ENCODE measurements at regions of chr7 and their contacts with region 1.

Region 1: GRCh38 chr7:74061840-74062539 is 21.6 kb upstream of the LIMK1 start:
- DNase-seq: peak; percentile 43
- H3K4me3 Mint-ChIP-seq: no peak overlapping the region
- H3K27ac Mint-ChIP-seq: peak overlapping the region; percentile 80
- H3K4me1 Mint-ChIP-seq: peaks cover 2% of the 10 kb centered on the region
- H3K27me3 Mint-ChIP-seq: peaks cover 6% of the 10 kb centered on the region

Region 2: GRCh38 chr7:74133671-74134048 is 71.7 kb after region 1 on chr7:
- intact Hi-C with region 1: loop called (anchors 10 kb)
- DNase-seq: no peak
- H3K4me3 Mint-ChIP-seq: no peak overlapping the region
- H3K27ac Mint-ChIP-seq: no peak overlapping the region
- H3K4me1 Mint-ChIP-seq: peaks cover 5% of the 10 kb centered on the region
- H3K27me3 Mint-ChIP-seq: no peaks in the 10 kb centered on the region

Measured in activated T-helper 2 cell treated with anti-CD3 and anti-CD28 coated beads, Interferon-gamma antibody, Interleukin-2, Interleukin-4, amounts not matched to agents 10 μg/mL and 5 μg/mL and 100 μg/mL, durations not matched to agents 14 hours and 24 hours and 36 hours (primary cell).